Heart left ventricle (tissue), 16 donors: ENCODE measurements at regions of chr12 and their contacts with region 1.

Region 1: DNA sequence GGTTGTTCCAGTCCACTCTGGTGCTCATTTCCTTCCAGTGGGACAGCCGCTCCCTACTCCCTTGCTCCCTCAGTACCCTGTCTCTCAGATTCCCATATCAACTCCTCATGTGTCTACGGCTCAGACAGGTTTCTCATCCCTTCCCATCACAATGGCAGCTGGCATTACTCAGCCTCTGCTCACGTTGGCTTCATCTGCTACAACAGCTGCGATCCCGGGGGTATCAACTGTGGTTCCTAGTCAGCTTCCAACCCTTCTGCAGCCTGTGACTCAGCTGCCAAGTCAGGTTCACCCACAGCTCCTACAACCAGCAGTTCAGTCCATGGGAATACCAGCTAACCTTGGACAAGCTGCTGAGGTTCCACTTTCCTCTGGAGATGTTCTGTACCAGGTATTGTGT is 69.9 kb downstream of the RAD52 start:
- DNase-seq: no peak
- ATAC-seq: peak in 1 of 4 donors; percentile 34
- H3K4me3 ChIP-seq: no peak overlapping the region
- H3K27ac ChIP-seq: no peak overlapping the region
- H3K4me1 ChIP-seq: no peaks in the 10 kb centered on the region
- H3K27me3 ChIP-seq: no peaks in the 10 kb centered on the region
- CTCF ChIP-seq: no peak
- POLR2A ChIP-seq: no peak

Region 2: GRCh38 chr12:642633-643474 is 236.8 kb before region 1 on chr12:
- intact Hi-C with region 1: no loop called
- DNase-seq: peak; percentile 83 to 93 (median 88)
- ATAC-seq: peak; percentile 9 to 78 (median 66)
- H3K4me3 ChIP-seq: peak overlapping the region; percentile 43 to 86 (median 74)
- H3K27ac ChIP-seq: peak overlapping the region; percentile 93 to 100 (median 99)
- H3K4me1 ChIP-seq: peaks cover 7 to 91% (median 54%) of the 10 kb centered on the region in 12 donors
- H3K27me3 ChIP-seq: no peaks in the 10 kb centered on the region
- CTCF ChIP-seq: peak in 11 of 12 donors; percentile 9 to 51 (median 34)
- POLR2A ChIP-seq: peak in 1 of 2 donors; percentile 28

Region 3: GRCh38 chr12:685388-685787 is 194.3 kb before region 1 on chr12:
- intact Hi-C with region 1: no loop called
- DNase-seq: peak in 1 of 5 donors; percentile 29
- ATAC-seq: peak in 3 of 4 donors; percentile 29 to 47 (median 32)
- H3K4me3 ChIP-seq: no peak overlapping the region
- H3K27ac ChIP-seq: peak overlapping the region in 1 of 12 donors; percentile 59
- H3K4me1 ChIP-seq: peaks cover 0 to 29% (median 8%) of the 10 kb centered on the region in 12 donors
- H3K27me3 ChIP-seq: no peaks in the 10 kb centered on the region
- CTCF ChIP-seq: no peak
- POLR2A ChIP-seq: no peak

Region 4: GRCh38 chr12:926641-927040 is 47.0 kb after region 1 on chr12:
- intact Hi-C with region 1: loop called in 1 of 10 experiments (anchors 5 kb)
- DNase-seq: no peak
- ATAC-seq: no peak
- H3K4me3 ChIP-seq: no peak overlapping the region
- H3K27ac ChIP-seq: no peak overlapping the region
- H3K4me1 ChIP-seq: peaks cover 0 to 2% (median 0%) of the 10 kb centered on the region in 12 donors
- H3K27me3 ChIP-seq: no peaks in the 10 kb centered on the region
- CTCF ChIP-seq: no peak
- POLR2A ChIP-seq: no peak

Region 5: DNA sequence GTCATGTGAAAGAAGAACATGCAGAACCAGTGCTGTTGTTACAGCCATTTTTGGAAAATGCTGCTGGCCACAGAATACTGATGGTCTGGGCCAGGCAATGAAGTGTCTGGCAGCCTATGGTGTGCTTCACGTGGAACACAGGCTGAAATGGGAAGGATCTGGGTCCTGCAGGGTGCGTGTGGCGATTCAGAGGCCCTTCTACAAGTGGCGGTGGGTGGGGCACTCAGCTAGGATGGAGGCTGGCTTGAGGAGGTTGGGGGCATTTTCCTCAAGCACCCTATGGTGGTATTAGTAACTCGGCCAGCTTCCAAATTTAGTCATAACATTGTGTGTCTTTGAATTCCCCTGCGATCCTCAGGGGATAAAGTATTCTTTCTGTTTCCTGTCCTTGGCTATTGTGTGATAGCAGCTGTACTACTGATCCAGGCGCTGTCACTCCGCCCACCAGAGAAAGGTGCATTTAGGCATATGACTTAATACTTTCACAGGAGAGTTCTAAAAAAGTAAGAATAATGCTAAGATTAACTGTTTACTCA is 79.0 kb after region 1 on chr12:
- intact Hi-C with region 1: no loop called
- DNase-seq: peak in 3 of 5 donors; percentile 43 to 65 (median 47)
- ATAC-seq: peak; percentile 49 to 90 (median 69)
- H3K4me3 ChIP-seq: no peak overlapping the region
- H3K27ac ChIP-seq: peak overlapping the region in 8 of 12 donors; percentile 0 to 56 (median 24)
- H3K4me1 ChIP-seq: peaks cover 0 to 17% (median 0%) of the 10 kb centered on the region in 12 donors
- H3K27me3 ChIP-seq: no peaks in the 10 kb centered on the region
- CTCF ChIP-seq: no peak
- POLR2A ChIP-seq: no peak